ENCODE measurements at regions of chr5 and their contacts with region 1.

Region 1: DNA sequence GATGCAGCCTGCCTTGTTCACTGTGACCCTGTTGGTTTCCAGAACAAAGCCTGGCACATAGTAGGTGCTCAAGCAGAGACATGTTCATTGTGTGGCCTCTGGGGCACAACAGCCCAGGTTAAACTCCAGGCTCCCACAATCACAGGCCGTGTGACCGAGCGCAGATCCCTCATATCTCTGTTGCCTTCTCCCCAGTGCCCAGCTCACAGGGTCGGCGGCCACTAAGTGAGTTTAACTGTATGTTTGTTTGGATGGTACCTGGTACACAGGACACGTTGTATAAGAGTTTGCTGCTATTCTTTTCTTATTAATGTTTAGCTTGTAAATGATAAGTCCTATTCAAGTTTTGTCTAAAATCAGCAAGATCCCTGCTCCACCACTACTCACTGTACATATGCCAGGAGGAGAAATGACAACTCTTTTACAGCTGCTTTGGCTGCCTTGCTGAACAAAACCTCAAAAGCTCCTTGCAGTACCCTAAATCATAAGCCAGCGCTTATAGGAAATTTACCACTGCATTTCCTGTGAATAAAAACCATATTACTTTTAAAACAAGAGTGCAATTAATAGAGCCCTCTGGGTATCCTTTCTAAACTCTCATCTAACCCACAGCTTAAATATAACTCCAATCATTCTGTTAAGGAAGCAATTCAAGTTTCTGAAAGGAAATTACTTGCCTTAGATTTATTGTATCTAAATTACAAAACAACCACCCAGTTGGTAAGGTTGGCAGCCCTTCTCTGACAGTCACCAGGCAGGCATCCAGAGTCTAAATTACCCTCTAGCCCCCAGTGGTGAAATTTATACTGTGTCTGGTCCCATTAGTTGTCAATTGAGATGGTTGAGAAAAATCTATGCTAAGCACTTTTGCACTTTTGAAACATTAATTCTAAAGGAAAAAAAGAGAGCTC is 379.4 kb downstream of the SEMA5A start:
- DNase-seq: no peak
- H3K4me3 ChIP-seq: no peak overlapping the region
- H3K27ac ChIP-seq: peak overlapping the region in 1 of 2 donors; percentile 12
- H3K4me1 ChIP-seq: no peaks in the 10 kb centered on the region
- H3K27me3 ChIP-seq: no peaks in the 10 kb centered on the region
- CTCF ChIP-seq: no peak
- POLR2A ChIP-seq: no peak

Region 2: DNA sequence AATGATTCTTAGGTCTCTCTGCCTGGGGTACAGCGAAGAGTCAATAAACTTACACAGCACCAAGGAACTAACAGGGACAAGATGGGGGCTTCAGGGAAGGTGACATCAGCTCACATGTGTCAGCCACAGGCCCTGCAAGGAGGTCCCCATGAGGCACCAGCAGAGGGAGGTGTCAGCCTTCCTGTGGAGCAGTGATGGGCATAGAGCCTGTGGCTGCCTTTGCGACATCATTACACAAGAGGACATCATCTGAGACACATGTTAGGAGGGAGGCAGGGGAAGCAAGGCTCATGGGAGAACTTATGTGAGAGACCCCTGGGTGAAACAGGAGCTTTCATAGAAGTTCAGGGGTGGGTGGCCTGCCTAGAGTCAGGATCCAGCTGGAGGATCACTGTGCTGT is 10.2 kb before region 1 on chr5:
- intact Hi-C with region 1: no loop called
- DNase-seq: peak in 1 of 2 donors; percentile 28
- H3K4me3 ChIP-seq: no peak overlapping the region
- H3K27ac ChIP-seq: no peak overlapping the region
- H3K4me1 ChIP-seq: no peaks in the 10 kb centered on the region
- H3K27me3 ChIP-seq: no peaks in the 10 kb centered on the region
- CTCF ChIP-seq: peak in 1 of 3 donors; percentile 35
- POLR2A ChIP-seq: no peak

Region 3: DNA sequence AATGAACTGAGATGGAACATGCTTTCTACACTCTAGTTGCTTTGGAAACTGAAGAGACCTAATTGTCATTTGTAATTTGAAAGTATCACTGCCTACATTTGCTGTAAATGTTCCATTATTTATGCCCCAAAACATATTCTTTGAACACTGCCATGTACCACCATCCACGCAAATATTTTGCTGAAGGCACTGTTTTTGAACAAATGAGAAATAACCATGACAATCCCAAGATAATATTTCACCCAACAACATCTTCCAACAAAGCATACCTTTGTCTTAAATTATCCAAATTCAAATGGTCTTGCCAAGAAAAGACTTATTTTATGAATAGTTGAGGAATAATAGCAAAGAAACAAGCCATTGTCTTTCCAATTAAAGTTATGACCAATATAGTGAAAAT is 23.2 kb after region 1 on chr5:
- intact Hi-C with region 1: loop called (anchors 2 kb)
- DNase-seq: no peak
- H3K4me3 ChIP-seq: no peak overlapping the region
- H3K27ac ChIP-seq: peak overlapping the region in 1 of 2 donors; percentile 36
- H3K4me1 ChIP-seq: no peaks in the 10 kb centered on the region
- H3K27me3 ChIP-seq: no peaks in the 10 kb centered on the region
- CTCF ChIP-seq: no peak
- POLR2A ChIP-seq: no peak

Region 4: DNA sequence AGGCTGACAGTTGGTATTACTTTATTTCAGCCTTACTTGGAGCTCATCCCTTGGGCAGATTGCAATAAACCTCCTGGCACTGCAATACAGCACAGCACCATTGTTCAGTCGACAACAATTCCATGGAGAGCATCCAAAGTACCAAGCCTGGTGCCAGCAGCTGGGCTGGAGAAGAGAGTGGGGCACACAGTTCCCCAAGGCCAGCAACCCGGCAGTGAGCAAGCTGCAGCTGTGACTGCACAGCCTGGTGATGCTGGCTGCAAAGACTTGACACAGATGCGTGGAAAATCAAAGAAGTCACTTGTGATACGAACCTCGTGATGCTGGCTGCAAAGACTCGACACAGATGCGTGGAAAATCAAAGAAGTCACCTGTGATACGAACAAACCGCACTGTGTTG is 957.8 kb after region 1 on chr5:
- intact Hi-C with region 1: no loop called
- DNase-seq: no peak
- H3K4me3 ChIP-seq: no peak overlapping the region
- H3K27ac ChIP-seq: no peak overlapping the region
- H3K4me1 ChIP-seq: no peaks in the 10 kb centered on the region
- H3K27me3 ChIP-seq: no peaks in the 10 kb centered on the region
- CTCF ChIP-seq: no peak
- POLR2A ChIP-seq: no peak